PC-9 (cell line): ENCODE measurements at regions of chr11 and their contacts with region 1.

Region 1: GRCh38 chr11:5596607-5597201 is at the start of gene TRIM6:
- DNase-seq: peak; percentile 36 to 49
- H3K4me3 ChIP-seq: peak within 1 kb of the TSS; percentile 72
- H3K27ac ChIP-seq: peak within 1 kb of the TSS; percentile 78
- H3K4me1 ChIP-seq: peaks cover 20% of the 10 kb centered on the region
- H3K27me3 ChIP-seq: no peaks in the 10 kb centered on the region
- CTCF ChIP-seq: no peak
- total RNA-seq, gene TRIM6: 3.9 and 4.8 TPM in 2 replicates

Region 2: GRCh38 chr11:5620646-5621521 is 24.2 kb after region 1 on chr11:
- CTCF ChIA-PET with region 1: no interaction called
- POLR2A ChIA-PET with region 1: interaction called, 4 read pairs
- intact Hi-C with region 1: loop called (anchors 1 kb)
- DNase-seq: peak; percentile 42 to 91
- H3K4me3 ChIP-seq: peak overlapping the region; percentile 60; the same call in 1 of the 2 replicates
- H3K27ac ChIP-seq: peak overlapping the region; percentile 98
- H3K4me1 ChIP-seq: peaks cover 51% of the 10 kb centered on the region
- H3K27me3 ChIP-seq: no peaks in the 10 kb centered on the region
- CTCF ChIP-seq: no peak

Region 3: GRCh38 chr11:5684646-5685362 is 88.1 kb after region 1 on chr11 and contains the start of gene TRIM5:
- CTCF ChIA-PET with region 1: no interaction called
- POLR2A ChIA-PET with region 1: no interaction called
- intact Hi-C with region 1: loop called (anchors 2 kb)
- DNase-seq: peak; percentile 66 to 89
- H3K4me3 ChIP-seq: peak within 1 kb of the TSS; percentile 61
- H3K27ac ChIP-seq: peak within 1 kb of the TSS; percentile 93
- H3K4me1 ChIP-seq: peaks cover 14% of the 10 kb centered on the region
- H3K27me3 ChIP-seq: no peaks in the 10 kb centered on the region
- CTCF ChIP-seq: peak; percentile 49; the same call in 1 of the 2 replicates
- total RNA-seq, gene TRIM5: 19.1 and 20.5 TPM in 2 replicates